ENCODE measurements at regions of chr3 and their contacts with region 1.

Region 1: DNA sequence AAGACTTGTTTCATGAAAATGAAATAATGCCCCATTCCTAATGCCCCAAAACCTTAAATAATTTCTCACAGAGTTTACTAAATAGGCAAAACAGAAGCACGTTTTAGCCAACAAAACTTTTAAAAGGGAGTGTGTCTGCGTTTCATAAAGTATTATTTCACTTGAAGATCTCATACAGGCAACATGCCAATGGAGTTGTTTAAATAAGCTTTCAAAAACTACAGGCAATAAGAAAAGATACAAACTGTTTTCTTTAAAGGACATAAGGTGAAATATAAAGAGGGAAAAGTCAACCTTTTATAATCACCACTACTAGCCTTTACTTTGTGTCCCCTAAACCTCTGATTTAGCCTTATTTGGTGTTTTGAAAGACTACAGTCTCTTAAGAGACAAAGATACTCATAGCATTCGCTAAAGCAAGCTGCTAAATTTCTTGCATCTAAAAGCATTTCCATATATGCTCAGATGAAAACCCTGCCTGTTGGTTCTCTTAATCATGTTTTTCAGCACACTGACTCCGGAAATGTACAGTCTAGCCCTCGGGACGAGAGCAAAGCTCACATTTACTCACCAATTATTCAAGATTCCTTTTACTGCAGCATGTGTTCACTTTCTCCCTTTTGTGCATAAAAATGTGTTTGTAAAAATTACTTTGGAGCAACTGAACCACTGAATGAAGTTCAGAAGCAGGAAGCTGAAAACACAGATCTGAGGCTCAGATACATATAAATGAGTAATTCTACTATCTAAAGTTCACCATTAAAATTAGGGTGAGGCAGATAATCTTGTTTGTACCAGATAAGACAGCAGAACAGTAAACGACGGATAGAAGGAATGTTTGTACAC is 119.0 kb downstream of the GOLIM4 start:
- DNase-seq: no peak
- H3K4me3 Mint-ChIP-seq: peak overlapping the region; percentile 42
- H3K27ac Mint-ChIP-seq: peak overlapping the region; percentile 21
- H3K4me1 Mint-ChIP-seq: peaks cover 15% of the 10 kb centered on the region
- H3K27me3 Mint-ChIP-seq: no peaks in the 10 kb centered on the region
- CTCF ChIP-seq: no peak

Region 2: GRCh38 chr3:168002786-168003368 is 26.1 kb after region 1 on chr3:
- CTCF ChIA-PET with region 1: no interaction called
- intact Hi-C with region 1: loop called (anchors 2 kb)
- DNase-seq: peak; percentile 16
- H3K4me3 Mint-ChIP-seq: no peak overlapping the region
- H3K27ac Mint-ChIP-seq: no peak overlapping the region
- H3K4me1 Mint-ChIP-seq: no peaks in the 10 kb centered on the region
- H3K27me3 Mint-ChIP-seq: no peaks in the 10 kb centered on the region
- CTCF ChIP-seq: no peak

Measured in Calu3 (cell line).